ENCODE measurements at regions of chr1 and their contacts with region 1.

Region 1: DNA sequence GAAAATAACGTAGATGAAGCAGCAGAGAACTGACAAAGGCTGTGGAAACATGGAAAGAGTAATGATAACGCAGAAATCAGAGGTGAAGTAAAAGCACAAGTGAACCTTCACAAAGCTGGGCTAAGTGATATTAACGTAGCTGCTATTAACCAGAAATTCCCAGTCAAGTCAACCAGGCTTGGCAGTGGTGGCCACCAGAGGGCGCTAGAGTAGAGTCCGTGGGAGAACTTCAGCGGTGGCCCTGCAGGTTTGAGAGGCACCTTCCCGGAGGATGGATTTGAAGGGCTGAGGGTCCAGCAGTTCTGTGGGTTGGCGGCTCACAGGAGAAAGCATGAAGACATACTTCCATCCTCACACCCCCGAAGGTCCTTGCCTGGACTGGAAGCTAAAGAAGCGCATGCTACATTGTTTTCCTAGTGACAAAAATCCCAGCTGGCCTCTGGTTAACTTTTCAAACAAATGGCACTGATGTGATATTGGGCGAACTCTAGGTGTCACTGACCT is 81.7 kb upstream of the ZNF648 start:
- DNase-seq: peak; percentile 95 to 96
- H3K4me3 ChIP-seq: no peak overlapping the region
- H3K27ac ChIP-seq: peak overlapping the region; percentile 88
- H3K4me1 ChIP-seq: peaks cover 7 to 34% (median 24%) of the 10 kb centered on the region in 4 donors
- H3K27me3 ChIP-seq: no peaks in the 10 kb centered on the region
- CTCF ChIP-seq: peak; percentile 94 to 97

Region 2: DNA sequence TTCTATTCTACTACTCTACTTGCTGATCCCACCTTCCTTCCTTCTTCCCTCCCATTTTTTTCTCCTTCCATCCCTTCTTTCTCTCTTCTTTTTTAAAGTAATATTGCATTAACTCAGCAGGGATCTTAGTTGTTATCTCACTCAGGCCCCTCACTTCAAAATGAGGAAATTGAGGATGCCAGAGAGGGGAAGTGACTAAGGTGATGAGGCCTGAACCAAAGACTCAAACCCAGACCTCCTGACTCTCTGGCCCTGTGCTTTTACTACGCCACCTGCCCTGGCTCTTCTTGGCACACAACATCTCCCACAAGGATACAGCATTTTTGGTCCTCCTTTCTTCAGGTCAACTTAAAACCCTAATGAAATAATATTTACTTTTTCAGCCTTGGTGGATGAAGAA is 70.0 kb after region 1 on chr1:
- intact Hi-C with region 1: loop called (anchors 5 kb)
- DNase-seq: no peak
- H3K4me3 ChIP-seq: no peak overlapping the region
- H3K27ac ChIP-seq: no peak overlapping the region
- H3K4me1 ChIP-seq: no peaks in the 10 kb centered on the region
- H3K27me3 ChIP-seq: peaks cover 0 to 2% of the 10 kb centered on the region in 2 donors
- CTCF ChIP-seq: no peak

Measured in tibial artery (tissue), 4 donors.